PC-9 (cell line): ENCODE measurements at regions of chr6 and their contacts with region 1.

Region 1: GRCh38 chr6:143949535-143949934 is 58.5 kb downstream of the PLAGL1 start:
- DNase-seq: no peak
- H3K4me3 ChIP-seq: no peak overlapping the region
- H3K27ac ChIP-seq: no peak overlapping the region
- H3K4me1 ChIP-seq: no peaks in the 10 kb centered on the region
- H3K27me3 ChIP-seq: no peaks in the 10 kb centered on the region
- CTCF ChIP-seq: no peak

Region 2: DNA sequence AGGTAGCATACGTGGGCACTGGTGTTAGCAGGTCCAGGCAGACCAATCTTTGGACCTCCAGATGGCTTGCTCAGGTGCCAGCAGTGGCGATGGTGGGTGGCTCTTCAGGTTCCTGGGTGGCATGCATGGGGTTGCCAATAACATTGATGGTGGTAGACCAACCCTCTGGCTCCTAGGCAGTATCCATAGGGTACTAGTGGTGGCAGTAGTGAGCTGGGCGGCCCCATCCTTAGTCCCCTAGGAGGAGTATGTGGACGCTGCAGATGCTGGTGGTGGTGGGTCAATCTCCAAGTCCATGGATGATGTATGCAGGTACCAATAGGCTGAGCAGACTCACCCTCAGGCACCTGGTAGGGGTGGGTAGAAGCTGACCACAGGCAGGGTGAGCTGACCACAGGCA is 14.7 kb before region 1 on chr6:
- CTCF ChIA-PET with region 1: interaction called, 13 read pairs
- POLR2A ChIA-PET with region 1: no interaction called
- intact Hi-C with region 1: no loop called
- DNase-seq: no peak
- H3K4me3 ChIP-seq: no peak overlapping the region
- H3K27ac ChIP-seq: no peak overlapping the region
- H3K4me1 ChIP-seq: no peaks in the 10 kb centered on the region
- H3K27me3 ChIP-seq: no peaks in the 10 kb centered on the region
- CTCF ChIP-seq: no peak